Naive thymus-derived CD4-positive, alpha-beta T cell (primary cell): ENCODE measurements at regions of chr1 and their contacts with region 1.

Region 1: GRCh38 chr1:92536980-92537884 is 50.5 kb upstream of the GFI1 start:
- DNase-seq: peak in 7 of 9 donors; percentile 57 to 80 (median 74)
- ATAC-seq: peak; percentile 90
- H3K4me3 ChIP-seq: peak overlapping the region; percentile 15
- H3K4me3 Mint-ChIP-seq: peak overlapping the region; percentile 51 to 87 (median 81)
- H3K27ac ChIP-seq: peak overlapping the region; percentile 68
- H3K27ac Mint-ChIP-seq: peak overlapping the region; percentile 81 to 97 (median 91)
- H3K4me1 ChIP-seq: peaks cover 24 to 25% of the 10 kb centered on the region in 2 donors
- H3K4me1 Mint-ChIP-seq: peaks cover 19 to 84% (median 75%) of the 10 kb centered on the region in 7 donors
- H3K27me3 ChIP-seq: no peaks in the 10 kb centered on the region
- H3K27me3 Mint-ChIP-seq: no peaks in the 10 kb centered on the region

Region 2: GRCh38 chr1:92317836-92318493 is 219.3 kb before region 1 on chr1:
- CTCF ChIA-PET with region 1: interaction called, 3 read pairs
- POLR2A ChIA-PET with region 1: no interaction called
- intact Hi-C with region 1: loop called in 1 of 2 experiments (anchors 1 kb)
- DNase-seq: peak in 3 of 9 donors; percentile 7 to 27 (median 8)
- ATAC-seq: peak; percentile 46
- H3K4me3 ChIP-seq: no peak overlapping the region
- H3K4me3 Mint-ChIP-seq: peak overlapping the region; percentile 16 to 83 (median 65)
- H3K27ac ChIP-seq: no peak overlapping the region
- H3K27ac Mint-ChIP-seq: peak overlapping the region; percentile 61 to 96 (median 78)
- H3K4me1 ChIP-seq: peaks cover 40 to 55% of the 10 kb centered on the region in 2 donors
- H3K4me1 Mint-ChIP-seq: peaks cover 35 to 64% (median 62%) of the 10 kb centered on the region in 7 donors
- H3K27me3 ChIP-seq: no peaks in the 10 kb centered on the region
- H3K27me3 Mint-ChIP-seq: no peaks in the 10 kb centered on the region

Region 3: GRCh38 chr1:92502247-92502646 is 35.0 kb before region 1 on chr1:
- CTCF ChIA-PET with region 1: no interaction called
- POLR2A ChIA-PET with region 1: no interaction called
- intact Hi-C with region 1: loop called in 1 of 2 experiments (anchors 2 kb)
- DNase-seq: no peak
- ATAC-seq: no peak
- H3K4me3 ChIP-seq: no peak overlapping the region
- H3K4me3 Mint-ChIP-seq: no peak overlapping the region
- H3K27ac ChIP-seq: no peak overlapping the region
- H3K27ac Mint-ChIP-seq: peak overlapping the region in 1 of 9 donors; percentile 23
- H3K4me1 ChIP-seq: no peaks in the 10 kb centered on the region
- H3K4me1 Mint-ChIP-seq: peaks cover 11 to 38% (median 24%) of the 10 kb centered on the region in 7 donors
- H3K27me3 ChIP-seq: no peaks in the 10 kb centered on the region
- H3K27me3 Mint-ChIP-seq: no peaks in the 10 kb centered on the region

Region 4: GRCh38 chr1:92577261-92577895 is 40.1 kb after region 1 on chr1:
- CTCF ChIA-PET with region 1: no interaction called
- POLR2A ChIA-PET with region 1: interaction called, 9 read pairs
- intact Hi-C with region 1: loop called in 1 of 2 experiments (anchors 1 kb)
- DNase-seq: no peak
- ATAC-seq: no peak
- H3K4me3 ChIP-seq: no peak overlapping the region
- H3K4me3 Mint-ChIP-seq: peak overlapping the region in 1 of 10 donors; percentile 80
- H3K27ac ChIP-seq: no peak overlapping the region
- H3K27ac Mint-ChIP-seq: peak overlapping the region in 3 of 9 donors; percentile 24 to 88 (median 36)
- H3K4me1 ChIP-seq: peaks cover 4 to 6% of the 10 kb centered on the region in 2 donors
- H3K4me1 Mint-ChIP-seq: peaks cover 8 to 76% (median 29%) of the 10 kb centered on the region in 7 donors
- H3K27me3 ChIP-seq: no peaks in the 10 kb centered on the region
- H3K27me3 Mint-ChIP-seq: no peaks in the 10 kb centered on the region

Region 5: DNA sequence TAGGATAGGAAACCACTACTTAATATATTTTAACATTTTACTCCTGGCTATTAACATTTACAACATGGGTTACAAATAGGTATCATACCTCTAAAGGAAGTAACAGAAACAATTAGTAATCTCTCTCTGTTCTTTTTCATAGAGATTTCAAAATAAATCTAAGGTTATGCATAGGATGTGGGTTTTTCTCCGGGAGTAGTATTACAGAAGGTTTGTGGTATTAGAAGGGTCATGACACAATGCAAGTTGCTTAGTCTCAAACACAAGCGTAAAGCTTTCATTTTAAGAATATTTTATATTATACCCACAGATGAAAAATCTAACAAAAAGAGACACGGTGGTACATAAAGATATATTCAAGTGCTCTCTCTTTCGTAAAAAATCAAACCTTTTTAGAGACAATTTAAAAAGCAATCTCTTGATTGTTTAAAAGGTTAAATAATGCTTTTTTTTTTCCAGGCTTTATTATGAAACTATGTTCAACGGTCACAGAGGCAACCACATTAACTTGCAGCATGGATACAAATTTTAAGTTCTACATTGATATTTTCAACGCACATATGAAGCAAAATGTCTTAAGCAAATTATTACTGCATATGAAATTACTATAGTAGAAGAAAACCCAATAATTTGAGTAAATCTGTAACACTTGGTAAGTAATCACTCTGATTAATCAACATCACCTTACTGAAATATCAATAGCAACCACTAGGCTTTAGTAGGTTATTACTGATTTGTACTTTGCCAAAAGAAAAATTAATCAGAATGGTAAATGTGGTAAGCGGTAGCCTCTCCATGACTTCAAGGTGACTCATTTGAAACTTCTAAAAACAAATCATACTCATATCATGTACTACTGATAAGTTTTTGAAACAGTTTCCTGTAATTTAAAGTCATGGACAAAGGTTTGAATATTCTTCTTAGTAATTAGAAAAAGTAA is 46.9 kb after region 1 on chr1:
- CTCF ChIA-PET with region 1: interaction called, 5 read pairs
- POLR2A ChIA-PET with region 1: interaction called, 9 read pairs
- intact Hi-C with region 1: loop called (anchors 1 kb)
- DNase-seq: peak in 7 of 9 donors; percentile 50 to 82 (median 76)
- ATAC-seq: peak; percentile 93
- H3K4me3 ChIP-seq: peak overlapping the region; percentile 30
- H3K4me3 Mint-ChIP-seq: peak overlapping the region; percentile 25 to 88 (median 68)
- H3K27ac ChIP-seq: peak overlapping the region; percentile 47
- H3K27ac Mint-ChIP-seq: peak overlapping the region; percentile 41 to 93 (median 86)
- H3K4me1 ChIP-seq: peaks cover 27 to 38% of the 10 kb centered on the region in 2 donors
- H3K4me1 Mint-ChIP-seq: peaks cover 22 to 66% (median 63%) of the 10 kb centered on the region in 7 donors
- H3K27me3 ChIP-seq: no peaks in the 10 kb centered on the region
- H3K27me3 Mint-ChIP-seq: no peaks in the 10 kb centered on the region

Region 6: DNA sequence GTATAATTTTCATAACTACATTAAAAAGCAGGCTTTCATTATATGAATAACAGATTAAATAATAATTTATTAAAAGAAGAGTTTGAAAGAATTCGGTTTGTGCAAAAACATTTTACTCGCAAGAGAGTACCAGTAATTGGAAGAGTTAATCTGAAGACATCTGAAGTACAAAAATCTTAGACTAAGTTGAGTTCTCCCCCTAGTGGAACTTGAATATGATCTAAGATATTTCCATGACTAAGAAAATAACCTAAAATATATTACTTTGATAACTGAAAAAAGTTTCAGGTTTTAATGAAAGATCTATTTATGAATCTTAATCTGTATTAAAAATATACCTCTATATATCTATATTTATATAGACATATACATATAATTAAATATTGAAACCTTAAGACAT is 62.0 kb after region 1 on chr1:
- CTCF ChIA-PET with region 1: interaction called, 3 read pairs
- POLR2A ChIA-PET with region 1: interaction called, 11 read pairs
- intact Hi-C with region 1: loop called (anchors 1 kb)
- DNase-seq: peak in 6 of 9 donors; percentile 19 to 61 (median 48)
- ATAC-seq: peak; percentile 59
- H3K4me3 ChIP-seq: no peak overlapping the region
- H3K4me3 Mint-ChIP-seq: no peak overlapping the region
- H3K27ac ChIP-seq: no peak overlapping the region
- H3K27ac Mint-ChIP-seq: no peak overlapping the region
- H3K4me1 ChIP-seq: no peaks in the 10 kb centered on the region
- H3K4me1 Mint-ChIP-seq: peaks cover 4 to 30% (median 9%) of the 10 kb centered on the region in 7 donors
- H3K27me3 ChIP-seq: no peaks in the 10 kb centered on the region
- H3K27me3 Mint-ChIP-seq: no peaks in the 10 kb centered on the region